Pancreas (tissue), 10 donors: ENCODE measurements at regions of chr14 and their contacts with region 1.

Region 1: DNA sequence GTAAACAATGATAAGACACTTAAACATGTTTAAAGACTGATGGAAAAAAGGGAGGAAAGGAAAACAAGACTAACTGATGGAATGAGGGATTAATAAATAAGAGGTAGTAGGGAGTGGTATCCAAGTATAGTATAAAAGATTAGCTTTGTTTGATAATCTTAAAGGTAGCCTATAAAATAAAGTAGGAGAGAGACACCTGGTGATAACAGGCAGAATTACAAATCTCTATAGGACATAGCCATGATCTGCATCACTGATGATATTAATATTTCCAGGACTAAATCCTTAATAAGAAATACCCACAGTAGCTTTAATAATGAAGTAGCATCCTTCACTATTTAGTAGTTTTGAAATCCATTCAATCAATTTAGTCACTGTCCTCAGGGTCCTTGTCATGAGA is 30.4 kb downstream of the DLGAP5 start:
- DNase-seq: no peak
- ATAC-seq: peak; percentile 63 to 96 (median 87)
- H3K4me3 ChIP-seq: no peak overlapping the region
- H3K27ac ChIP-seq: no peak overlapping the region
- H3K4me1 ChIP-seq: no peaks in the 10 kb centered on the region
- H3K27me3 ChIP-seq: no peaks in the 10 kb centered on the region
- CTCF ChIP-seq: peak in 2 of 4 donors; percentile 38 to 40

Region 2: GRCh38 chr14:55085060-55085660 is 75.8 kb before region 1 on chr14:
- intact Hi-C with region 1: loop called in 2 of 3 experiments (anchors 5 kb)
- DNase-seq: no peak
- ATAC-seq: peak; percentile 36 to 78 (median 61)
- H3K4me3 ChIP-seq: no peak overlapping the region
- H3K27ac ChIP-seq: no peak overlapping the region
- H3K4me1 ChIP-seq: peaks cover 0 to 12% (median 0%) of the 10 kb centered on the region in 3 donors
- H3K27me3 ChIP-seq: no peaks in the 10 kb centered on the region
- CTCF ChIP-seq: no peak

Region 3: DNA sequence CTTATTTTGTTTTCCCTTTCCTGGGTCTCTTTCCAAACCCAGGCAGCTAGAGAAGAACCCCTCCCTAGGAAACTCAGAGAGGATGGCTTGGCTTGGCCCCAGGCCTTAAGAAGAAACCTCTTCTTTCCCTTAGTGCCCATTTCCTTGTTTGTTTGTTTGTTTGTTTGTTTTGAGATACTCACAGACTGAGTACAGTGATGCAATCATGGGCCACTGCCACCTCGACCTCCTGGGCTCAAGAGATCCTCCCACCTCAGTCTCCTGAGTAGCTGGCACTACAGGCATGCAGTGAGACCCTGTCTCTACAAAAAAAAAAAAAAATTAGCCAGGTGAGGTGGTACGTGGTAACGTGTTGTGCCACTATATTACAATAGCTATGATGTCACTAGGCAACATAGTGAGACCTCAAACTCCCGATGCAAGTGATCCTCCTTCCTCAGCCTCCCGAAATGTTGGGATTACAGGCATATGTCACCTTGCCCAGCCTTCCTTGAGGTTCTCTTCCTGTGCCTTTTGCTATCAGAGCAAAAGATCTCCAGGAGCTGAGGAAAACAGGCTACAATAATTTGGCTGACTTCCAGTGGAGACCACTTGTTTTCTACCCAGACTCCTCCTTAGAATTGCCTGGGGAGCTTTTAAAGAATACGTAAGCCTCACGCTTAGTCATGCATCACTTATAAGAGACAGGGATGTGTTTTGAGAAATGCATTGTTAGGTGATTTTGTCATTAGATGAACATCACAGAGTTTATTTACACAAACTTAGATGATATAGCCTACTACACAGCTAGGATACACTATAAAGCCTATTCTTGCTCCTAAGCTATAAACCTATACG is 66.5 kb before region 1 on chr14:
- intact Hi-C with region 1: loop called in 2 of 3 experiments (anchors 5 kb)
- DNase-seq: no peak
- ATAC-seq: no peak
- H3K4me3 ChIP-seq: no peak overlapping the region
- H3K27ac ChIP-seq: no peak overlapping the region
- H3K4me1 ChIP-seq: peaks cover 0 to 4% (median 0%) of the 10 kb centered on the region in 3 donors
- H3K27me3 ChIP-seq: no peaks in the 10 kb centered on the region
- CTCF ChIP-seq: no peak